ENCODE measurements at regions of chr14 and their contacts with region 1.

Region 1: GRCh38 chr14:75522224-75522982 is at the start of gene BATF:
- DNase-seq: peak; percentile 87
- ATAC-seq: peak; percentile 60
- H3K4me3 Mint-ChIP-seq: peak within 1 kb of the TSS; percentile 100
- H3K27ac Mint-ChIP-seq: peak within 1 kb of the TSS; percentile 100
- H3K4me1 Mint-ChIP-seq: peaks cover 68% of the 10 kb centered on the region
- H3K27me3 Mint-ChIP-seq: no peaks in the 10 kb centered on the region
- total RNA-seq, gene BATF: 165 to 187 TPM

Region 2: DNA sequence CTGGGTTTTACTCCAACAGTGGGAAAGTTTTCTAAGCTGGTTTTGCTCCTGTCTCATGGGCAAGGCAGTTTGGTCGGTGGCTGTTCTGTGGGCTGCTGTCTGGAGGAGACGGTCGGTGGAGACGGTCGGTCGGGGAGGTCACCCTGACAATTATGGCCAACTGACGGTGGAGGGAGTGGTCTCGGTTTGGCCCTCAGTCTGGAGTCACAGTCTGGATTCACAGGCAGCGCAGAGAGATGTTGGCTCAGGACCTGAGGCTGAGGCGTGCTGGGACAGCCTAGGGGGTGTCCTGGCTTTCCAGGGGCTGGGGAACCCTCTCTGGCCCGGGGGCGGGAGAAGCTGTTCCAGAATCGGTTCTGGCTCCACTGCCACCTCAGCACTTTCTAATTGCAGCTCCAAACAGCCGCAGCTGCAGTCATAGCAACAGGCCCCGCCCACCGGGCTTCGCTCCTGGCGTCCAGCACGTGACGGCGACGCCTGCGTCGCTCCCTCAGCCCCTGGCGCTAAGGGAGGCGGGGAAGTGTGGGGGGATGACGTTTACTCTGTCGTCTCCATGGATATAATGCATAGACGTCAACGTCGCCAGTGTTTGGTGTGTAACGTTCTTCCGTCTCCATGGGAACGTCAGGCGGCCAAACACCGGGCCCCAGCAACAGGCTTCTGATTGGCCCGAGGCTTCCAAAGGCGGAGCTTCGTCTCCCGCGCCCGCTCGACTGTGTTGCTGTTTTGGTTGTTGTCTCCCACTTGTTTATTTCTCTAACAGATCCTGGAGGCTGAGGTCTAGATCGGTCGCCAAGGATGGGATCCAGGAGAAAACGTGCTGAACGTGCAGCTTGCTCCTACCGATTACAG is 263.6 kb before region 1 on chr14:
- CTCF ChIA-PET with region 1: no interaction called
- POLR2A ChIA-PET with region 1: no interaction called
- intact Hi-C with region 1: loop called in 1 of 2 experiments (anchors 1 kb)
- DNase-seq: peak; percentile 99
- ATAC-seq: peak; percentile 98
- H3K4me3 Mint-ChIP-seq: peak overlapping the region; percentile 77
- H3K27ac Mint-ChIP-seq: peak overlapping the region; percentile 97
- H3K4me1 Mint-ChIP-seq: peaks cover 24% of the 10 kb centered on the region
- H3K27me3 Mint-ChIP-seq: no peaks in the 10 kb centered on the region

Region 3: DNA sequence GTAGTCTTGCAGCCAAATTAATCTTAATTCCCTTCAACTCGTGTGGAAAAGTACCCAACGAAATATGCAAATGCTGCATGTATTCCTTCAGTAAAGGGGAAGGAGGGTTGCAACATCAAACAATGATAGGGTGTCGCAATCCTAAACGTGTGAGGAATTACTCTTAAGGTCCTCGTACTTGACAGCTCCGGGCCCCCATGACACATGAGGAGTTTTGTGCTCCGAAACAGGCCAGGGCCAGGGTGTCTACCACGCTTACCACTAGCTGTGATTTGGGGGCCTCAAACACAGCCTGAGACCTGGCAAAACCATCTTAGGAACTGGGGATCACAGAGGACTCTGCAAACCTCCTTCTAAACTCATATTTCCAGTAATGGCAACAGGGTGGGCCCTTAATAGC is 223.3 kb before region 1 on chr14:
- CTCF ChIA-PET with region 1: no interaction called
- POLR2A ChIA-PET with region 1: no interaction called
- intact Hi-C with region 1: no loop called
- DNase-seq: no peak
- ATAC-seq: no peak
- H3K4me3 Mint-ChIP-seq: no peak overlapping the region
- H3K27ac Mint-ChIP-seq: no peak overlapping the region
- H3K4me1 Mint-ChIP-seq: peaks cover 46% of the 10 kb centered on the region
- H3K27me3 Mint-ChIP-seq: no peaks in the 10 kb centered on the region

Region 4: GRCh38 chr14:75497191-75497590 is 25.2 kb before region 1 on chr14:
- CTCF ChIA-PET with region 1: interaction called, 31 read pairs
- POLR2A ChIA-PET with region 1: interaction called, 7 read pairs
- intact Hi-C with region 1: loop called (anchors 1 to 2 kb)
- DNase-seq: peak; percentile 66
- ATAC-seq: peak; percentile 73
- H3K4me3 Mint-ChIP-seq: peak overlapping the region; percentile 48
- H3K27ac Mint-ChIP-seq: peak overlapping the region; percentile 82
- H3K4me1 Mint-ChIP-seq: peaks cover 61% of the 10 kb centered on the region
- H3K27me3 Mint-ChIP-seq: no peaks in the 10 kb centered on the region

Region 5: GRCh38 chr14:75533791-75534555 is 11.6 kb after region 1 on chr14:
- CTCF ChIA-PET with region 1: interaction called, 13 read pairs
- POLR2A ChIA-PET with region 1: interaction called, 30 read pairs
- intact Hi-C with region 1: no loop called
- DNase-seq: no peak
- ATAC-seq: no peak
- H3K4me3 Mint-ChIP-seq: peak overlapping the region; percentile 2
- H3K27ac Mint-ChIP-seq: peak overlapping the region; percentile 58
- H3K4me1 Mint-ChIP-seq: peaks cover 75% of the 10 kb centered on the region
- H3K27me3 Mint-ChIP-seq: no peaks in the 10 kb centered on the region

Region 6: DNA sequence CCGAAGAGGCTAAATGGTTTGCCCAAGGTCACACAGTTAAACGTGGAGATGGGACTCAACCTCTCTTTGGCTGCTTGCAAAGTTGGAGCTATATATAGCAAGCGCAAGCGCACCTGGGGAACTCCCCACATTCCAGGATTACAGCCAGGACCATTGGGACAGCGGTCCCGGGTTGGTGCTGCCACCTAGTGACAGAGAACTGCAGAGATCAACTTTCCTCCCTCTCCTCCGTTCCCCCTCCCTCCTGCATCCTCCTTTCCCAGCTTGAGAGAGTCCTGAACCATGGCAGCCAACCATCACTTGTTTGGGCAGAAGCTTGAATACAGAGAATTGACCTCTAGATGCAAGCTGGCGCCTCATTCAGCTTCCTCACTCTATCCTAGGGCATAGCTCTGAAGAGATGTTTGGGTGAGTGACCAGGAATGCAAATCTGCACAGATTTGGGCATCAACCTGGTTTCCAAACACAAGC is 38.6 kb after region 1 on chr14:
- CTCF ChIA-PET with region 1: interaction called, 25 read pairs
- POLR2A ChIA-PET with region 1: interaction called, 19 read pairs
- intact Hi-C with region 1: loop called (anchors 1 kb)
- DNase-seq: peak; percentile 71
- ATAC-seq: no peak
- H3K4me3 Mint-ChIP-seq: peak overlapping the region; percentile 13
- H3K27ac Mint-ChIP-seq: peak overlapping the region; percentile 88
- H3K4me1 Mint-ChIP-seq: peaks cover 82% of the 10 kb centered on the region
- H3K27me3 Mint-ChIP-seq: no peaks in the 10 kb centered on the region